ENCODE measurements at regions of chr16 and their contacts with region 1.

Region 1: GRCh38 chr16:67816240-67817031 is 9.7 kb downstream of the TSNAXIP1 start:
- DNase-seq: peak; percentile 91
- H3K4me3 Mint-ChIP-seq: no peak overlapping the region
- H3K27ac Mint-ChIP-seq: no peak overlapping the region
- H3K4me1 Mint-ChIP-seq: peaks cover 6% of the 10 kb centered on the region
- H3K27me3 Mint-ChIP-seq: peaks cover 24% of the 10 kb centered on the region

Region 2: GRCh38 chr16:67672739-67673662 is 143.4 kb before region 1 on chr16:
- CTCF ChIA-PET with region 1: interaction called, 17 read pairs
- DNase-seq: peak; percentile 82
- H3K4me3 Mint-ChIP-seq: no peak overlapping the region
- H3K27ac Mint-ChIP-seq: peak overlapping the region; percentile 58
- H3K4me1 Mint-ChIP-seq: peaks cover 13% of the 10 kb centered on the region
- H3K27me3 Mint-ChIP-seq: no peaks in the 10 kb centered on the region

Region 3: GRCh38 chr16:67833418-67834241 is 17.2 kb after region 1 on chr16:
- CTCF ChIA-PET with region 1: interaction called, 45 read pairs
- DNase-seq: peak; percentile 97
- H3K4me3 Mint-ChIP-seq: peak overlapping the region; percentile 82
- H3K27ac Mint-ChIP-seq: peak overlapping the region; percentile 76
- H3K4me1 Mint-ChIP-seq: peaks cover 16% of the 10 kb centered on the region
- H3K27me3 Mint-ChIP-seq: peaks cover 3% of the 10 kb centered on the region

Region 4: DNA sequence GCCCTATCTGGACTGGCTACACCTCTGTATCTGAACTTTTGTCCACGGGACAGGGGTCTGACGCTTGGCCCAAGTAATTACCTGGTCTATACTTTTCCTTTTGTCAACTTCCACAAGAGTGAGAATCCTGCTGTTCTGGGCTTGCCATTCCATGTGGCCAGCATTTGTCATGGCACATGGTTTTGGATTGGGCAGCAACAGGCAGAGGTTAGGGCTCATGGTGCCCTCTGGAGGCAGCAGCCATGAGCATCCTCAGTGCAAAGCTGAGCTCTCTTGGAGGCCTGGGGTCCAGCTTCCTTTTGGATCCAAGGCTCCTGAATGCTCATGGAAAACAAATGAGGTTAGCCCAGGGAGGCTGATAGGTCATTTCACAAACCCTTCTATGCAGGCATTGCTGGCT is 48.9 kb after region 1 on chr16:
- CTCF ChIA-PET with region 1: interaction called, 82 read pairs
- DNase-seq: peak; percentile 52
- H3K4me3 Mint-ChIP-seq: no peak overlapping the region
- H3K27ac Mint-ChIP-seq: no peak overlapping the region
- H3K4me1 Mint-ChIP-seq: no peaks in the 10 kb centered on the region
- H3K27me3 Mint-ChIP-seq: no peaks in the 10 kb centered on the region

Region 5: GRCh38 chr16:67917852-67918236 is 101.4 kb after region 1 on chr16:
- CTCF ChIA-PET with region 1: interaction called, 10 read pairs
- DNase-seq: no peak
- H3K4me3 Mint-ChIP-seq: no peak overlapping the region
- H3K27ac Mint-ChIP-seq: no peak overlapping the region
- H3K4me1 Mint-ChIP-seq: peaks cover 14% of the 10 kb centered on the region
- H3K27me3 Mint-ChIP-seq: no peaks in the 10 kb centered on the region

Region 6: GRCh38 chr16:67942200-67942509 is 125.7 kb after region 1 on chr16:
- CTCF ChIA-PET with region 1: interaction called, 11 read pairs
- DNase-seq: peak; percentile 56
- H3K4me3 Mint-ChIP-seq: no peak overlapping the region
- H3K27ac Mint-ChIP-seq: peak overlapping the region; percentile 80
- H3K4me1 Mint-ChIP-seq: peaks cover 37% of the 10 kb centered on the region
- H3K27me3 Mint-ChIP-seq: no peaks in the 10 kb centered on the region

Region 7: DNA sequence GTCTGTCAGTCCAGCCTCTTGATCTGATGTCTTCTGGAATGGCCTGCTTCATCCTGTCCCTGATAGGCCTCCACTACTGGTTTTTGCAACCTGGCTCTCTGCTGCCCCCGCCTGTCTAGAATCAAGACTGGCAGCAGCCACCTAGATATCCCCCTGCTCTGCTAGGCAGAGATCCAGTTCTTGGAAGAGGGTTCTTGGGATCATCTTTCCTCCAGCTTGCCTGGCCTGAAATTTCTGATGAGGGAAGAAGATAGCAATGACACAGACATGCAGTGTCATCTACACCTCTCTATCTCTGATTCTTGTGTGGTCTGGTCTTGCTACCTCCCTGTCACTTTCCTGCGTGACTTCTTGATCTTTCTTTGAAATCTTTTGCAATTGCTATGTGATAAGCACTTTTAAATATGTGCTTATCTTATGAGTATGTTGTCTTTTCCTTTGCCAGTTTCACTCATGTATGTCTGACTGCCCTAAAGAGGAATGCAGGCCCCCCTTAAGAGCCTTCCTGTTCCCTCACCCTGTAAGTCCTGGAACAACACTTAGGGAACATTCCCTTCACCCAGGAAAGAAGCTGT is 248.4 kb after region 1 on chr16:
- CTCF ChIA-PET with region 1: interaction called, 14 read pairs
- DNase-seq: peak; percentile 85
- H3K4me3 Mint-ChIP-seq: no peak overlapping the region
- H3K27ac Mint-ChIP-seq: peak overlapping the region; percentile 88
- H3K4me1 Mint-ChIP-seq: peaks cover 83% of the 10 kb centered on the region
- H3K27me3 Mint-ChIP-seq: no peaks in the 10 kb centered on the region